Pancreas (tissue), 10 donors: ENCODE measurements at regions of chr1 and their contacts with region 1.

Region 1: GRCh38 chr1:99691175-99691574 is 45.3 kb downstream of the PALMD start:
- DNase-seq: no peak
- ATAC-seq: no peak
- H3K4me3 ChIP-seq: no peak overlapping the region
- H3K27ac ChIP-seq: no peak overlapping the region
- H3K4me1 ChIP-seq: no peaks in the 10 kb centered on the region
- H3K27me3 ChIP-seq: no peaks in the 10 kb centered on the region
- CTCF ChIP-seq: no peak

Region 2: DNA sequence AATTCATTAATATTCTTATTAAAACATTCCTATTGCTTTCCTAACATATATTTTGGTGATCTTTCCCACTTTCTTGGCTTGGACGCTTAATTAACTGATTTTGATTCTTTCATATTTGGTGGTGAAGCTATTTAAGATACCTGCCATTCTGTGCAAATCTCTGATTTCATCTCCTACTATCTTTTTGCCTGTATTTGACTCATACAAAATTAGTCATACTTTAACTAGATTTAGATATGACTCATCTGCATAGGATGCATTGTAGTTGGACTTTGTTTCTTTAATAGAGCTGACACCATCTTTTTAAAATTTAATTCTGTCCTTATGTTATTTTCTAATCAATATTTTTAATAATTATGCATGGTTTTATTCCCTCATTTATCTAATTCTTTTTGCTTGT is 520.7 kb before region 1 on chr1:
- intact Hi-C with region 1: loop called in 1 of 3 experiments (anchors 10 kb)
- DNase-seq: no peak
- ATAC-seq: peak in 2 of 4 donors; percentile 46 to 47
- H3K4me3 ChIP-seq: no peak overlapping the region
- H3K27ac ChIP-seq: no peak overlapping the region
- H3K4me1 ChIP-seq: peaks cover 0 to 11% (median 4%) of the 10 kb centered on the region in 3 donors
- H3K27me3 ChIP-seq: no peaks in the 10 kb centered on the region
- CTCF ChIP-seq: no peak

Region 3: GRCh38 chr1:99645699-99646531 is 45.3 kb before region 1 on chr1 and contains the start of gene PALMD:
- intact Hi-C with region 1: no loop called
- DNase-seq: peak in 4 of 6 donors; percentile 14 to 58 (median 25)
- ATAC-seq: peak; percentile 37 to 72 (median 68)
- H3K4me3 ChIP-seq: peak within 1 kb of the TSS in 3 of 4 donors; percentile 10 to 41 (median 20)
- H3K27ac ChIP-seq: peak within 1 kb of the TSS in 2 of 4 donors; percentile 53 to 68
- H3K4me1 ChIP-seq: peaks cover 0 to 8% (median 0%) of the 10 kb centered on the region in 3 donors
- H3K27me3 ChIP-seq: peaks cover 0 to 6% (median 0%) of the 10 kb centered on the region in 4 donors
- CTCF ChIP-seq: no peak
- total RNA-seq, gene PALMD: 2.6 to 5.6 (median 4.2) TPM